ENCODE measurements at regions of chr3 and their contacts with region 1.

Region 1: GRCh38 chr3:42961633-42962032 is 17.5 kb upstream of the GASK1A start:
- DNase-seq: peak; percentile 39
- H3K4me3 Mint-ChIP-seq: no peak overlapping the region
- H3K27ac Mint-ChIP-seq: no peak overlapping the region
- H3K4me1 Mint-ChIP-seq: no peaks in the 10 kb centered on the region
- H3K27me3 Mint-ChIP-seq: peaks cover 21% of the 10 kb centered on the region
- CTCF ChIP-seq: no peak

Region 2: DNA sequence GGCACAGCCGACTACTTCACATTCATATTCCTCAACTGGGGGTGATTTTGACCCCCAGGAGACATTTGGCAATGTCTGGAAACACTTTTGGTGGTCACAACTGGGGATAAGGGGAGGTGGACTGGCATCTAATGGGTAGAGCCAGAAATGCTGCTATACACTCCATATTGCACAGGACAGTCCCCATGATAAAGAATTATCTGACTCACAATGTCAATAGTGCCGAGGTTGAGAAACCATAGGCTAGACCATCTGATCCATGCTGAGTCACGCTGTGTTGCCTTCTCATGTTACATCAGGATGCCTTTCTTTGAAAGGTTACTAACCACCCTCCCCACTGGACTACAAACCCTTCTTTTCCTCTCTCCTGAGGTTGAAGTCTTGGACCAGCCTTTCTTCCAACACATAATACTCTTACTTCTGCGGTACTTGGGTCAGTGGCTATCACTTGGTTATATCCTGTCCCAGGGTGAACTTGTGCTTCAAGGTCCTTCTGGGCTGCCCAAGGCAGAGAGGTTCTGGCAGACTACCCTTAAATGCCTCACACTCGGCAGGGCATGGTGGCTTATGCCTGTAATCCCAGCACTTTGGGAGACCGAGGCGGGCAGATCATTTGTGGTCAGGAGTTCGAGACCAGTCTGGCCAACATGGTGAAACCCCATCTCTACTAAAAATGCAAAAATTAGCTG is 1693.5 kb before region 1 on chr3:
- CTCF ChIA-PET with region 1: no interaction called
- intact Hi-C with region 1: no loop called
- DNase-seq: peak; percentile 67
- H3K4me3 Mint-ChIP-seq: no peak overlapping the region
- H3K27ac Mint-ChIP-seq: peak overlapping the region; percentile 61
- H3K4me1 Mint-ChIP-seq: peaks cover 23% of the 10 kb centered on the region
- H3K27me3 Mint-ChIP-seq: no peaks in the 10 kb centered on the region
- CTCF ChIP-seq: no peak

Region 3: GRCh38 chr3:43102773-43103480 is 141.3 kb after region 1 on chr3:
- CTCF ChIA-PET with region 1: no interaction called
- intact Hi-C with region 1: no loop called
- DNase-seq: no peak
- H3K4me3 Mint-ChIP-seq: no peak overlapping the region
- H3K27ac Mint-ChIP-seq: no peak overlapping the region
- H3K4me1 Mint-ChIP-seq: peaks cover 7% of the 10 kb centered on the region
- H3K27me3 Mint-ChIP-seq: no peaks in the 10 kb centered on the region
- CTCF ChIP-seq: no peak

Region 4: GRCh38 chr3:43155464-43156121 is 194.0 kb after region 1 on chr3:
- CTCF ChIA-PET with region 1: interaction called, 25 read pairs
- intact Hi-C with region 1: loop called (anchors 1 kb)
- DNase-seq: peak; percentile 73
- H3K4me3 Mint-ChIP-seq: no peak overlapping the region
- H3K27ac Mint-ChIP-seq: no peak overlapping the region
- H3K4me1 Mint-ChIP-seq: no peaks in the 10 kb centered on the region
- H3K27me3 Mint-ChIP-seq: peaks cover 47% of the 10 kb centered on the region
- CTCF ChIP-seq: peak; percentile 34

Region 5: DNA sequence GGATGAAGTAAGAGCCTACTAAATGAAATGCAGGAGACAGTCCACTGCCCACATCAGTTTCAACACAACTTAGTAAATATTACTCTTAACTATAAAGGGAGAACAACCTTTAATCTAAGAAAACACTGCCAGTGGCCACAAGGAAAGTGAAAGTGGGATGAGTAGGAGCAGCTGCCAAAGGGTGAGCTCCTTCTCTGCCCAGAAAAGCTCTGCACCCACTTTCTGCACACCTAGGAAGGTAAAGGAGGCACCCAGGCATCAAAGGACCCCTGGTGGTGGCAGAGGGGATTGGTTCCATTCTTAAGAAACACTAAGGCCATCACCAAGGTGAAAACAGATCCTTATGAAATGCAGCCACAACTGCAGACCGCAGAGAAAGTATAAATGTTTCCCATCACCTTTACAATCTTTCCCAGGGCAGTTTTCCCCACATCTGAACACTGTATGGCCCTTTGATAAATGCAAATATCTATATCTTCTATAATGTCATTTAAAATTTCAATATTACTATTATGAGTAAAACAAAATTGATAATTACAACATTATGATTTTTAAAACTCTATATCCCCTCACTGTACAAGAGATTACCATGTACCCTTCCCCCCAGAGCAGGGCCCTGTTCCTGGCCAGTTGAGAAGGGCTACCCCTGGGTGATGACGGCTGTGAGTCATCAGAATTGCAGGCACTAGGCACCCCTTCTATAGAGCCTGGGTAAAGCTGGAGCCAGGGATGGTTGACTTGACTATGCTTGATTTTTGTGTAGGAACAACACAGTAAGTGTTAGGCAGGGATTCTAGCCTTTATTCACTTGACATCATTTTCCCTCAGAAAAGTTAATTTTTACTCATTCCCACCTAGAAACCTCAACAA is 416.7 kb after region 1 on chr3:
- CTCF ChIA-PET with region 1: interaction called, 10 read pairs
- intact Hi-C with region 1: loop called (anchors 1 kb)
- DNase-seq: peak; percentile 67
- H3K4me3 Mint-ChIP-seq: no peak overlapping the region
- H3K27ac Mint-ChIP-seq: no peak overlapping the region
- H3K4me1 Mint-ChIP-seq: no peaks in the 10 kb centered on the region
- H3K27me3 Mint-ChIP-seq: no peaks in the 10 kb centered on the region
- CTCF ChIP-seq: peak; percentile 51

Region 6: GRCh38 chr3:43423142-43423541 is 461.5 kb after region 1 on chr3:
- CTCF ChIA-PET with region 1: no interaction called
- intact Hi-C with region 1: no loop called
- DNase-seq: no peak
- H3K4me3 Mint-ChIP-seq: no peak overlapping the region
- H3K27ac Mint-ChIP-seq: no peak overlapping the region
- H3K4me1 Mint-ChIP-seq: no peaks in the 10 kb centered on the region
- H3K27me3 Mint-ChIP-seq: no peaks in the 10 kb centered on the region
- CTCF ChIP-seq: no peak

Region 7: GRCh38 chr3:43503067-43503728 is 541.6 kb after region 1 on chr3:
- CTCF ChIA-PET with region 1: interaction called, 12 read pairs
- intact Hi-C with region 1: loop called (anchors 1 kb)
- DNase-seq: no peak
- H3K4me3 Mint-ChIP-seq: no peak overlapping the region
- H3K27ac Mint-ChIP-seq: no peak overlapping the region
- H3K4me1 Mint-ChIP-seq: no peaks in the 10 kb centered on the region
- H3K27me3 Mint-ChIP-seq: no peaks in the 10 kb centered on the region
- CTCF ChIP-seq: no peak